CD8-positive, alpha-beta memory T cell (primary cell): ENCODE measurements at regions of chr5 and their contacts with region 1.

Region 1: GRCh38 chr5:151751091-151751490 is 7.3 kb downstream of the ATOX1 start:
- DNase-seq: no peak
- H3K4me3 ChIP-seq: no peak overlapping the region
- H3K4me3 Mint-ChIP-seq: no peak overlapping the region
- H3K27ac ChIP-seq: no peak overlapping the region
- H3K27ac Mint-ChIP-seq: peak overlapping the region in 1 of 8 donors; percentile 75
- H3K4me1 ChIP-seq: peaks cover 15% of the 10 kb centered on the region
- H3K4me1 Mint-ChIP-seq: peaks cover 32 to 55% (median 47%) of the 10 kb centered on the region in 3 donors
- H3K27me3 ChIP-seq: no peaks in the 10 kb centered on the region
- H3K27me3 Mint-ChIP-seq: no peaks in the 10 kb centered on the region

Region 2: DNA sequence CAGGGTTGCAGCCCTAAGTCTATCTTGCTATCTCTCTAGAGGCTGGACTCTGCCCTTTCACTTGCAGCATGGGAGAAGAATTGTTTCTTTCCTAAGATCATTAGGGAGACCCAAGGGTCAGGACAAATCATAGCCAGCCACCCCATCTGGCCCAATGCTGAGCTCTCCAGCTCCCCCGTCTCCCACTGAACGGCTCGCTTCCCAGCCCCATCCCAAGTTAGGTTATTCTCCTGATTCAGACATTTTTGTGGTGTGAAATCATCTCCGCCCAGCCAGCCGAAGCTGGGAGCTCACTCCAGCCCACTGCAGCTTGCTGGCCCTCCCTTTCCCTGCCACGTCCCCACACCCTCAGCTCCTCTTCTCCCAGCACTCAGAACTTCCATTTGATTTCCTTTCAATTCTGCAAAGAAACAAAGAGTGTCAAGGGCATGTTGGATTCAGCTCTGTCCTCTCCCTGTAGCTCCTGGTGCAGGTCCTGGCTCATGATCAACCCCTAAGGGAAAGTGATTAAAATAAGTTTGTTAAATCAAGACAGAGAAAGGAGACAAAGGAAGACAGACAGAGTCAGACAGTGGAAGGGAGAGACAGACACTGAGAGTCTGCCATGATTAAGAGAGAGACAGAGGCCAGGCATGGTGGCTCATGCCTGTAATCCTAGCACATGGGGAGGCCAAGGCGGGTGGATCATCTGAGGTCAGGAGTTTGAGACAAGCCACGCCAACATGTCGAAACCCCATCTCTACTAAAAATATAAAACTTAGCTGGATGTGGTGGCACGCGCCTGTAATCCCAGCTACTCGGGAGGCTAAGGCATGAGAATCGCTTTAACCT is 51.8 kb before region 1 on chr5:
- CTCF ChIA-PET with region 1: no interaction called
- POLR2A ChIA-PET with region 1: no interaction called
- DNase-seq: no peak
- H3K4me3 ChIP-seq: no peak overlapping the region
- H3K4me3 Mint-ChIP-seq: no peak overlapping the region
- H3K27ac ChIP-seq: no peak overlapping the region
- H3K27ac Mint-ChIP-seq: no peak overlapping the region
- H3K4me1 ChIP-seq: no peaks in the 10 kb centered on the region
- H3K4me1 Mint-ChIP-seq: no peaks in the 10 kb centered on the region
- H3K27me3 ChIP-seq: no peaks in the 10 kb centered on the region
- H3K27me3 Mint-ChIP-seq: peaks cover 5 to 13% of the 10 kb centered on the region in 2 donors

Region 3: DNA sequence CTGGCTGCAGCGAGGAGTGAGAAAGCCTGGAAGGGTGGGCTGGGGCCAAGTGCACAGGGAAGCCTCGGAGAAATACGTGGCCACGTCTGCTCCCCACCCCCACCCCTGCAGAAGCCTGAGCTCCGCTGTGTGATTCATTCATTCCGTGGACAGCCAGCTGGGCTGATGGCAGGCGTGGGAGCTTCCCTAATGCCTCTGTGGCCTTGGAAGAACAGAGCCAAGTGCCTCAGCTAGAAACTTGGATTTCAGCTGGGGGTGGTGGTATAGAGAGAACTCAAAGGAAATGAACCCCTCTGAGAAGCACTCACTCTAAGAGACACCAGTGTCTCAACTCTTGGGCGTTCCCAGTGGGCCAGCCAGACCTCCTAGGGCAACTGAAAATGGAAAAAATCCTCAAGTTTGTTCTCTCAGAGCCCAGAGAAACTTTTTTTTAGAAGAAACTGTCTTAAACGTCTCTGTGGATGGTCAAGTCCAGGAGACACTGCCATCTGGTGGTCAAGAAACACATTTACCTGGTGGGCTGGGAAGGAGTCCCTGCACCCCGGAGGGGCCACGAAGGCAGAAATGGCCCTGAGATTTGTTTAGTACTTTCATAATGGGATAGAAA is 10.7 kb before region 1 on chr5:
- CTCF ChIA-PET with region 1: interaction called, 22 read pairs
- POLR2A ChIA-PET with region 1: interaction called, 4 read pairs
- DNase-seq: peak; percentile 20 to 62 (median 42)
- H3K4me3 ChIP-seq: no peak overlapping the region
- H3K4me3 Mint-ChIP-seq: no peak overlapping the region
- H3K27ac ChIP-seq: no peak overlapping the region
- H3K27ac Mint-ChIP-seq: peak overlapping the region in 4 of 8 donors; percentile 25 to 82 (median 54)
- H3K4me1 ChIP-seq: peaks cover 12% of the 10 kb centered on the region
- H3K4me1 Mint-ChIP-seq: peaks cover 22 to 30% (median 29%) of the 10 kb centered on the region in 3 donors
- H3K27me3 ChIP-seq: no peaks in the 10 kb centered on the region
- H3K27me3 Mint-ChIP-seq: no peaks in the 10 kb centered on the region

Region 4: DNA sequence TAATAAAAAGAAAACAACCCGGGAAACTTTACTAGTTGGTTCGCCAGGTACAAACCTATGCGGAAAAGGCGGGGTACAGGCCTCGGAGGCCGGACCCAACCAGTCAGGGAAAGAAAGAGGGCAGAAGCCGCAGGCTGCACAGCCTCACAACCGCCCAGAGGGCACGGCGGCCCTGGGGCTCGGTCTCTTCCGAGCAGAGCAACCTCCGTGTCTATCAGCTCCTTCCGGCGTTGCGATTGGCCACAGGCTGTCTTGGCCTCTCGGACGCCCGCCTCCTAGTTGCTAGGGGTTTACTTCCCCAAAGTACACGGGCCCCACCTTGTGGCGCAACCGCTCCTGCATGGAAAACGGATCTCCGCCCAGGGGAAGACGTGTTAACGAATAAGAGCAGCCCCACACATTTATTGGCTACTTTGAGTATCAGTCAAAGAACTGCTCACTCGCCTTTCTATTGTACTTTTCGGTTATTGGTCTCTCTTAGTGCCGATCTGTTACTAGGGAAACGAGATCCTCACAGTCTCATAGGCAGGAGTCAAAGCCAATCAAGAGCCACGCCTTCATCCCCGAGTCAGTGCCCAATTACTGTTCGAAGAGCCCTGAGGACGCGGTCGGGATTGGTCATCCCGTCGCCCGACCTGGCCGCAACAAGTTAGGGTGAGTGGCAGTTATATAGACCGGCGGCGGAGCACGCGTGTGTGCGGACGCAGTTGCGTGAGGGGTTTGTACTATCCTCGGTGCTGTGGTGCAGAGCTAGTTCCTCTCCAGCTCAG is 20.4 kb after region 1 on chr5 and contains the start of gene G3BP1:
- CTCF ChIA-PET with region 1: interaction called, 17 read pairs
- POLR2A ChIA-PET with region 1: interaction called, 81 read pairs
- DNase-seq: peak; percentile 98 to 100 (median 100)
- H3K4me3 ChIP-seq: peak within 1 kb of the TSS; percentile 86
- H3K4me3 Mint-ChIP-seq: peak within 1 kb of the TSS in 6 of 7 donors; percentile 83 to 98 (median 94)
- H3K27ac ChIP-seq: peak within 1 kb of the TSS; percentile 84
- H3K27ac Mint-ChIP-seq: peak within 1 kb of the TSS in 7 of 8 donors; percentile 57 to 95 (median 91)
- H3K4me1 ChIP-seq: peaks cover 47% of the 10 kb centered on the region
- H3K4me1 Mint-ChIP-seq: peaks cover 38 to 49% (median 47%) of the 10 kb centered on the region in 3 donors
- H3K27me3 ChIP-seq: no peaks in the 10 kb centered on the region
- H3K27me3 Mint-ChIP-seq: no peaks in the 10 kb centered on the region
- total RNA-seq, gene G3BP1: 371 to 377 TPM

Region 5: GRCh38 chr5:151820903-151821302 is 69.8 kb after region 1 on chr5:
- CTCF ChIA-PET with region 1: no interaction called
- POLR2A ChIA-PET with region 1: no interaction called
- DNase-seq: no peak
- H3K4me3 ChIP-seq: no peak overlapping the region
- H3K4me3 Mint-ChIP-seq: no peak overlapping the region
- H3K27ac ChIP-seq: no peak overlapping the region
- H3K27ac Mint-ChIP-seq: peak overlapping the region in 1 of 8 donors; percentile 65
- H3K4me1 ChIP-seq: no peaks in the 10 kb centered on the region
- H3K4me1 Mint-ChIP-seq: peaks cover 0 to 2% (median 0%) of the 10 kb centered on the region in 3 donors
- H3K27me3 ChIP-seq: no peaks in the 10 kb centered on the region
- H3K27me3 Mint-ChIP-seq: no peaks in the 10 kb centered on the region